ENCODE measurements at regions of chr20 and their contacts with region 1.

Region 1: DNA sequence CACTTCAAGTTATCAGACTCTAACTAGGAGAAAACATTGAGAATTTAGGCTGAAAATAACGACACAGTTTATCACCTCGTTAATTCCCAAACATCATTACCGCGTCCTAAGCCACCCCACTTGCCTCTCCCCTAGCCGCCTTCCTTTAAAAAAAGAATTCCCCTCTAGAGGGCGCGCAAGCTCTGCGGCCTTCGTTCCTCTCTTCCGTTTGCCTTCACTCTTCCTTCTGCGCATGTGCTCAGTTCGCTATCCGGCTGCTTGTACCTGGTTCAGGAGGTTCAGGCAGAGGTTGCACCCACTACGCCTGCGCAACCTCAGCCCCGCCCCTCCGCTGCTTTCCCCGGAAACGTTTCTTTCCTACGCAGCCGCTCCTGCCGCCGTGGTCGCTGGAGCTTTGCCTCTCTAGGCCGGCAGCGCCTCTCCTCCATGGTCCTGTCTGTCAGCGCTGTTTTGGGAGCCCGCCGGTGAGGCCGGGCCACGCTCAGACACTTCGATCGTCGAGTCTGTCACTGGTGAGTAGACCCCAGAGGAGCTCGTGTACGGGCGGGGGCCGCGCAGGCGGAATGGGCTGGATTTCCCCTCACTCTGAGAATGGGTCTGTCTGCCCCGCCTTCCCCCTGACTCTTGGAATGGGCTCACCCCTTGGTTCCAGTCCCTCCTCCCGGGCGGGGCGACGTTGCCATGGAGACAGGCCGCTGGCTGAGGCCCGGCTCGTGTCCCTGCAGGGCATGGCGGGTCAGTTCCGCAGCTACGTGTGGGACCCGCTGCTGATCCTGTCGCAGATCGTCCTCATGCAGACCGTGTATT is at the start of gene SYS1:
- DNase-seq: peak; percentile 97
- H3K4me3 Mint-ChIP-seq: peak within 1 kb of the TSS; percentile 95
- H3K27ac Mint-ChIP-seq: peak within 1 kb of the TSS; percentile 97
- H3K4me1 Mint-ChIP-seq: peaks cover 69% of the 10 kb centered on the region
- H3K27me3 Mint-ChIP-seq: no peaks in the 10 kb centered on the region
- total RNA-seq, gene SYS1: 25.6 and 26.4 TPM in 2 replicates

Region 2: GRCh38 chr20:45318948-45319347 is 44.1 kb before region 1 on chr20:
- intact Hi-C with region 1: loop called (anchors 1 kb)
- DNase-seq: no peak
- H3K4me3 Mint-ChIP-seq: peak overlapping the region; percentile 62
- H3K27ac Mint-ChIP-seq: peak overlapping the region; percentile 93
- H3K4me1 Mint-ChIP-seq: peaks cover 63% of the 10 kb centered on the region
- H3K27me3 Mint-ChIP-seq: peaks cover 3% of the 10 kb centered on the region

Region 3: GRCh38 chr20:45373353-45374100 is 10.5 kb after region 1 on chr20:
- intact Hi-C with region 1: loop called (anchors 1 kb)
- DNase-seq: peak; percentile 79
- H3K4me3 Mint-ChIP-seq: peak overlapping the region; percentile 78
- H3K27ac Mint-ChIP-seq: peak overlapping the region; percentile 84
- H3K4me1 Mint-ChIP-seq: peaks cover 22% of the 10 kb centered on the region
- H3K27me3 Mint-ChIP-seq: no peaks in the 10 kb centered on the region

Region 4: DNA sequence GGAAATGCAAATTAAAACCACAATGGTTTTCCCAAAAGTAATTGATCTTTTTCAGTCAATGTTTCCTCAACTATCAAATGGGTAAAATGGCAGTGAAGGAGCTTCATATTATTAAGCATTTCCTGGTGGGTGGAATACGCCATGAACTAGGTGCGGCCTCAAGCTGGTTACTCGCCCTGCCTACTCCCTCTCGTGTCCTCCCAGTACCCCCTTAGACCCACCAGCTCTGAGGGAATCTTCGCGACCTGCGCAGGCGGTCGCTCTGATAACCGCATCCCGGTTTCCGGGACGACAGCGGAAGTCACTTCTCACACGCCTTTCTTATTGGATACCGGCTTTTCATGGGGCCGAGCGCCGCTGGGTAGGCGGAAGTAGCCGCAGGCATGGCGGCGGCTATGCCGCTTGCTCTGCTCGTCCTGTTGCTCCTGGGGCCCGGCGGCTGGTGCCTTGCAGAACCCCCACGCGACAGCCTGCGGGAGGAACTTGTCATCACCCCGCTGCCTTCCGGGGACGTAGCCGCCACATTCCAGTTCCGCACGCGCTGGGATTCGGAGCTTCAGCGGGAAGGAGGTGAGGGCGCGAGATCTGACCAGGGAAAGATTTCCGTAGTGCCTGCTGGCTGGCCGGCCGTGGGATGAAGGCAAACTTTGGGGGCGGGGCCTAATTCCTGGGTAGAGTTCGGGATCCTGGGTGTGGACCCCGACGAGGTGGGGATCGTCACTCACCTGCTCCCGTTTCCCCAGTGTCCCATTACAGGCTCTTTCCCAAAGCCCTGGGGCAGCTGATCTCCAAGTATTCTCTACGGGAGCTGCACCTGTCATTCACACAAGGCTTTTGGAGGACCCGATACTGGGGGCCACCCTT is 53.0 kb after region 1 on chr20 and contains the start of gene PIGT:
- intact Hi-C with region 1: loop called (anchors 1 kb)
- DNase-seq: peak; percentile 86
- H3K4me3 Mint-ChIP-seq: peak within 1 kb of the TSS; percentile 94
- H3K27ac Mint-ChIP-seq: peak within 1 kb of the TSS; percentile 90
- H3K4me1 Mint-ChIP-seq: peaks cover 39% of the 10 kb centered on the region
- H3K27me3 Mint-ChIP-seq: no peaks in the 10 kb centered on the region
- total RNA-seq, gene PIGT: 89.8 and 90.6 TPM in 2 replicates

Region 5: DNA sequence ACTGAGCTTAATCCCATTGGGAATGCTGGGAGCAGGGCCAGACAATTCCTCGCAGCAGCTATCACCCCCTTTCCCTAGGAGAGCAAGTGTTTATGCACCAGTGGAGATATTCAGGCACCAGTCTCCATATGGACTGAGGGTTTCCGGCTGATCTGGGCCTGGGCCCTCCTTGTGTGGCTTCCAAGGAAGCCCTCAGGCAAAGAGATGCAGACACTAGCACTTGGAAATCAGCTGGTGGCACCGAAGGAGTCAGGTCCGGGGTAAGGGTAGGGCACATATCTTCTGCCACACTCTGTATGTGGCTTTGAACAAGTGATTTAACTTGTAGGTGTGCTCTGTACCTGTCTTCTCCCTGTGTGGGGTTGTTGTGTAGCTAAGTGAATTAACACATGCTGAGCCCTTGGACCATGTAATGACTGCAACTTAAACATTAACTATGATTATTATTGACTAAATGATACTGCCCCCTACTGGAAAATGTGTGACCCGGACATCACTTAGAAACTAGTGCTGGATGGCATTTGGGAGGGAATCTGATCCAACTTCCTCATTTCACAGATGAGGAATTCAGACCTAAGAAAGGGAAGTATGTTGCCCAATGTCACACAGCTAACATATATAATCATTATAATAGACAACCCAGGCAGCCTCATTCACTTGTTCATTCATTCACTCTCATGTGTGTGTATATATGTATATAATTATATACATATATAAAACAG is 87.3 kb after region 1 on chr20:
- intact Hi-C with region 1: loop called (anchors 1 kb)
- DNase-seq: no peak
- H3K4me3 Mint-ChIP-seq: no peak overlapping the region
- H3K27ac Mint-ChIP-seq: no peak overlapping the region
- H3K4me1 Mint-ChIP-seq: peaks cover 15% of the 10 kb centered on the region
- H3K27me3 Mint-ChIP-seq: peaks cover 8% of the 10 kb centered on the region

Region 6: GRCh38 chr20:45857114-45857881 is 494.3 kb after region 1 on chr20 and contains the starts of genes ACOT8 and ZSWIM3:
- intact Hi-C with region 1: loop called (anchors 5 kb)
- DNase-seq: peak; percentile 95
- H3K4me3 Mint-ChIP-seq: peak within 1 kb of the TSS; percentile 97
- H3K27ac Mint-ChIP-seq: peak within 1 kb of the TSS; percentile 98
- H3K4me1 Mint-ChIP-seq: peaks cover 33% of the 10 kb centered on the region
- H3K27me3 Mint-ChIP-seq: no peaks in the 10 kb centered on the region
- total RNA-seq, gene ACOT8: 26.5 and 27.2 TPM in 2 replicates
- total RNA-seq, gene ZSWIM3: 5.8 and 6.2 TPM in 2 replicates